Posterior cingulate gyrus (tissue), 11 donors: ENCODE measurements at regions of chr20 and their contacts with region 1.

Region 1: GRCh38 chr20:44115762-44116644 is 71.0 kb downstream of the JPH2 start:
- DNase-seq: peak in 1 of 10 donors; percentile 77

Region 2: GRCh38 chr20:43838703-43839060 is 277.3 kb before region 1 on chr20:
- intact Hi-C with region 1: no loop called
- DNase-seq: peak in 1 of 10 donors; percentile 44

Region 3: DNA sequence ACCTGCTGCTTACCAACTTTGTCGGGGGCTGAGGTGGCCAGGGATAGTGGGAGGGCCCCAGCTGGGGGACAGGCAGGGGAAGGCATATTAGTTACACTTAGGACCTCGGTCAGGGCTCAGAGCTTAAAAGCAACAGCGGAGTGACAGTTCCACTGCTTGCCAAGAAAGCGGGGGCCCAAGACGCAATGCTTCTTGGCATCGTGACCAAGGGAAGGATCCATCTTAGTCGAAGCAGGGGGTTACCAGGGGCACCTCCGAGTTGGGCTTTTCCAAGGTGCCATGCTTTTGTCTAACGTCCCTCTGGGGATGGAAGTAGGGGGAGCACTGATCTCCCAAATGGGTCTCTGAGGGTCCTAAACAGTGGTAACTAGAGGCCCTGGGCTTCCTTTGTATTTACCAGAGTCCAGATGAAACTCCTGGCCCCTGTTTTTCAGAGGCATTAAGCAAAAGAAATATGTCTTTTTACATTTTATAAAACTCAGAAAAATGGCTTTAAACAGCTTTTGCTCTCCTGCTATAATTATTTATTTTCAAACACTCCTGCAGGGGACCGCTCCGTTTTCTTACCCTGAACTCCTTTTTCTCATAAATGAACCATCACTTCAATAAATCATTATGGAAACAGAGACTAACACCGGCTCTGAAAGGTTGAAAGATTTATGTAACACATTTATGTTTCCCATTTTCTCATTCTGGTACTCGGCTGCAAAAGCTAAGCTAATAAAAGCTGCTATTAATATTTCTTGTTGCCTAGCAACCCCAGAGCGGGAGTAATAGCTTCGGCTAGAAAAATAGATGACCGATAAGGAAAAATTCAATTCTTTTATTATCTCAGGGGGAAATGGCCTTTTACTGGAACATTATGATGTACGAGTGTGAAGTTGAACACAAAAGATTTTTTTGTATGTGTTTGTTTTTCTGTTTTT is 100.9 kb before region 1 on chr20:
- intact Hi-C with region 1: no loop called
- DNase-seq: peak in 1 of 10 donors; percentile 66

Region 4: GRCh38 chr20:44026647-44027342 is 89.2 kb before region 1 on chr20:
- intact Hi-C with region 1: no loop called
- DNase-seq: no peak

Region 5: GRCh38 chr20:44187051-44187762 is 71.2 kb after region 1 on chr20 and contains the start of gene JPH2:
- intact Hi-C with region 1: loop called (anchors 1 kb)
- DNase-seq: peak in 1 of 10 donors; percentile 66

Region 6: DNA sequence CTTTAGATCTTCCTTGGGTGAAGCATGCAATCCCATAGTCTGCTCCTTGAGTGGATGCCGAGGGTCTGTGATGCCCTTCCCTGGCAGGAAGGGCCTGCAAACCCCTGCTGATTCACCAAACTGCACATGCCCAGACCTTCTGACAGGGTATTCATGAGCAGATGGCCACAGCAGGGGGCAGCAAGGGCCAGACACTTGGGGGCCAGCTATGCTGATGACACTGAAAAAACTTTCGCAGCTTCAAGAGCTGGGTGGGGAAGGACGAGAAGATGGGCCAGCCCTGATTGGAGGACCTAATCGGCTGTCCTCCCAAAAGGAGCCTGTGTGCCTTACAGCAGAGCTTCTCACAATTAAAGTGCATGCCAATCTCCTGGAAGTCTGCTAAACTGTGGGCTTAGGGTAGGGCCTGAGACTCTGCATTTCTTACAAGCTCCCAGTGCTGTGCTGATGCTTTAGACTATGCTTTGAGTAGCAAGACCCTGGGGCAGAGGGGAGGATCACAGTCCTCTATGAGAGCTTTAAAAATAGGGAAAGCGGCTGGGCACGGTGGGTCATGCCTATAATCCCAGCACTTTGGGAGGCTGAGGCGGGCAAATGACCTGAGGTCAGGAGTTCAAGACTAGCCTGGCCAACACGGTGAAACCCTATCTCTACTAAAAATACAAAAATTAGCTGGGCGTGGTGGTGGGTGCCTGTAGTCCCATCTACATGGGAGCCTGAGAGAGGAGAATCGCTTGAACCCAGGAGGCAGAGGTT is 115.9 kb after region 1 on chr20:
- intact Hi-C with region 1: no loop called
- DNase-seq: peak in 1 of 10 donors; percentile 62

Region 7: DNA sequence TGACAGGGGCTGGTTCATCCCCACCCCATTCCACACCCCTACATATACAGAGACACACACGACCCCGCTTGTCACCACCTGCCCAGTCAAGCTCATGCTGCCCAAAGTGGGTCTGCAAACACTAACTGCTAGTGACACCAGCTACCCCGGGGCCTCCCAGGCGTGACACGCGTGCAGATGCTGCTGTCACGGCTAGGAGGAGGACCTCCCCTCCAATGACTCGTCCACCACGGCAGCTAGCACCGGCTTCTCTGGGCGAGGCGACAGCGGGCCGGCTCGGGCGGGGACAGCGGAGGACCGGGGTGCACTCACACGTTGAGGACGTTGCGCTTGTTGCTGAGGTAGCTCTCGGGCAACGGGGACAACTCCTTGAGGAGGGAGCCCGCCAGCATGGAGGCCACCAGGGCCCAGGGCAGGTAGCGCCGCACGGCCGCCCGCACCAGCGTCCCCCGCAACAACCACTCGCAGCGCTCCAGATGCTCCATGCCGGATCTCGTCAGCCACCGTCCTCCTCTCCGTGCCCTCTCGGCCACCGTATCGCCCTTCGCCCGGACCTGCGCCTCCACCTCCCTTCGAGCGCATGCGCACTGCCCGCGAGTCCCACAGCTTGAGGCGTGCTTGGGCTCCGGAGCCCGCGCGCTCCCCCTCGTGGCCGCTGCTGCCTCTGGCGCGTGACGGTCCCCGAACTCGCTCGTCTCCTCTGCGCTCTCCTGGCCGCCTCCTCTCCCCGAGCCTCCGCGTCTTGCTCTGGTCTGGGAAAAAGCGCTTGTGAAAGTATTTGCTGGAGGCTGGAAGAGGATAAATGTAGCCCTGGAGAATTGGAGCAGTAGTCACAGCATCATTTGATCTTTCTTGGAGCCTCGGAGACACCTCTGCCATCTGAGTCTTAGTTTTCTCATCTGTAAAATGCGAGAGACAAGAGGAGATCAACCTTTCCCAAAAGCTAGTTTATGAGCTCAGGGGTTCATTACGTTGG is 194.9 kb after region 1 on chr20 and contains the start of gene FITM2:
- intact Hi-C with region 1: loop called (anchors 2 kb)
- DNase-seq: peak; percentile 96 to 99 (median 98)